IMR-90 (cell line): ENCODE measurements at regions of chr2 and their contacts with region 1.

Region 1: GRCh38 chr2:117856415-117857210 is 42.1 kb downstream of the DDX18 start:
- DNase-seq: peak; percentile 96
- ATAC-seq: peak; percentile 95
- H3K4me3 ChIP-seq: no peak overlapping the region
- H3K27ac ChIP-seq: peak overlapping the region; percentile 18
- H3K4me1 ChIP-seq: peaks cover 3% of the 10 kb centered on the region; the same call in 1 of the 2 replicates
- H3K27me3 ChIP-seq: peaks cover 9% of the 10 kb centered on the region; the same call in 1 of the 2 replicates
- CTCF ChIP-seq: no peak
- POLR2A ChIP-seq: no peak
- RAD21 ChIP-seq: no peak

Region 2: DNA sequence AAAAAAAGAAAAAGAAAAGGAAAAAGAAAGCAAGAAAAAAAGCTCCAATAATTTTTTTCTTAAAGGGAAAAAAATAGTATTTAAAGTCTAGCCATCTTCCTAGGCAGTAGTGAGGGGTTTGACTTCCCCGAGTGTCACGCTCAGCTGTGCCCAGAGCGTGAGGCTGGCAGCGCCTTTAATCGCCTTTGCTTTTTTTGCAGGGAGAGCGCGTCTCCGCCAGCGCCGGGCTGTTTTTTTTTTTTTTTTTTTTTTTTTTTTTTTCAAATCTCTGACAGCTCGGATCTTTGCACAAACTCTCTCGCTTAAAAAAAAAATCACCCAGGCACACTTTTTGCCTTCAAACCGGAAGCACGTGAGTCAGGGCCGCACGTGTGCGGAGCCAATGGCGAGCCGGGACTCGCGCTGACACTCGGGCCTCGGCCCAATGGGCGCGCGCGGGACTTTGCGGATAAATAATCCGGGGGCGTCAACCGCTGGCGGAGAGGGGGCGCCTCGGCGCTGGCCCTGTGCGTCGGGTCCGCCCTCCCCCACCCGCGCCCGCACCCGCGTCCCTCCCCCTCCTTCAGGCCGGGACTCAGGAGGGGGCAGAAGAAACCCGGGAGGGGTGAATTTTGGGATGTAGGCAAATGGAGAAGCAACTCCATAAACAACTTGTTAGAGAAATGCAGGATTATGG is 991.0 kb after region 1 on chr2 and contains the start of gene EN1:
- CTCF ChIA-PET with region 1: no interaction called
- POLR2A ChIA-PET with region 1: interaction called, 12 read pairs
- dilution Hi-C with region 1: no loop called
- in situ Hi-C with region 1: no loop called
- intact Hi-C with region 1: no loop called
- DNase-seq: peak; percentile 8
- ATAC-seq: no peak
- H3K4me3 ChIP-seq: no peak within 1 kb of the TSS
- H3K27ac ChIP-seq: no peak within 1 kb of the TSS
- H3K4me1 ChIP-seq: no peaks in the 10 kb centered on the region
- H3K27me3 ChIP-seq: peaks cover 89% of the 10 kb centered on the region
- CTCF ChIP-seq: no peak
- POLR2A ChIP-seq: no peak
- RAD21 ChIP-seq: no peak
- total RNA-seq, gene EN1: not detected in 2 replicates